ENCODE measurements at regions of chr1 and their contacts with region 1.

Region 1: GRCh38 chr1:209784265-209785169 is at the start of gene C1orf74:
- DNase-seq: peak; percentile 96 to 100 (median 99)

Region 2: DNA sequence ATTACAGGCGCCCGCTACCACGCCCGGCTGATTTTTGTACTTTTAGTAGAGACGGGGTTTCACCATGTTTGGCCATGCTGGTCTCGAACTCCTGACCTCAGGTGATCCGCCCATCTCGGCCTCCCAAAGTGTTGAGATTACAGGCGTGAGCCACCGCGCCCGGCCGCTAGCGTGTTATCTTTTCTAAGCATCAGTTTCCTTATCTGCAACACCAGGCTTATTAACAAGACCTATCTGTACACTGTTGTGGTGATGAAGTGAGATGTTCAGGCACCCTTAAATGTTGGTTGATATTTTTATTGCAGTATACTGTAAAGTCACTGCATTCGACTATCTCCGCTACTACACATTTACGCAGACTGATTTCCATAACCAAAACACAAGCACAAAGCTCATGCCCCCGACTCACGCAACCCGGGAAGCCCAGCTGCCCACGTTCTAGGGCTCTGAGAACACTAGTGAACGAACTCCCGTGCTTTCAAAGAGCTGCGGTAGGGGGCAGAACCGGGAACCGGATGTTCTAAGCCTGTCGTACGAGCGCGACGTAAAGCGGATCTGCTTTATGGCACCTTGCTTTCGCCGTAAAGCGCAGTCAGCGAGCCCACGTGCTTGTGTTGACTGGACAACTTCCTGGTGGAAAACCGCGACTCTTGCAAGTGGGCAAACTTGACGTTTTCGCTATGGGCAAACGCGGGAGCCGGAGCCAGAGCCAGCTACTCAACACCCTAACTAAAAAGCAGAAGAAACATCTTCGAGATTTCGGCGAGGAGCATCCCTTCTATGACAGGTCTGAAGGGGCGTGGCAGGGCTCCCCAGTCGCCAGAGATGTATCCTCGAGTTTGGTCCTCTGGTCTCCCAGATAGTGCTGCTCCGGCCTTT is 43.1 kb after region 1 on chr1 and contains the start of gene UTP25:
- intact Hi-C with region 1: loop called (anchors 5 kb)
- DNase-seq: peak; percentile 85 to 96 (median 91)